AG04450 (cell line): ENCODE measurements at regions of chr11 and their contacts with region 1.

Region 1: GRCh38 chr11:6443269-6444003 is 2.6 kb upstream of the HPX start:
- DNase-seq: no peak
- H3K4me3 ChIP-seq: no peak overlapping the region
- H3K27ac ChIP-seq: no peak overlapping the region
- H3K27me3 ChIP-seq: no peaks in the 10 kb centered on the region
- CTCF ChIP-seq: peak; percentile 89

Region 2: DNA sequence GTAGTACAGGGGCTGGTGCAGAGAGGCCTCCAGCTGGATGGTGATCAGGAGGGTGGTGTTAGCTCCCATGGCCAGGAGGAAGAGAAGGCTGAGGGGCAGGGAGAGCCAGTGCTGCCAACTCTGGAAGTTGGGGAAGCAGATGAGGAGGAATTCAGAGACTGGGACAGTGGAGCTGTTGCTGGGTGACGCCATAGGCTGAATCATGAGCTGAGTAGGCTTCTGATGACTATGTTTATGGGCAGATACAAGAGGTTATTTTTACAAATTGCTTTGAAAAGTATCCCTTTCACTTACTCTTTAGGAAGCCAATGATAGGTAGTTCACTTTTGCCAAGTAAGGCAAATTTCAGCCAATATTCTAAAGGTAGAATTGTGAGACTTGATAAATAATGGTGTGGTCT is 415.9 kb before region 1 on chr11:
- CTCF ChIA-PET with region 1: no interaction called
- POLR2A ChIA-PET with region 1: no interaction called
- DNase-seq: no peak
- H3K4me3 ChIP-seq: no peak overlapping the region
- H3K27ac ChIP-seq: no peak overlapping the region
- H3K27me3 ChIP-seq: no peaks in the 10 kb centered on the region
- CTCF ChIP-seq: no peak

Region 3: DNA sequence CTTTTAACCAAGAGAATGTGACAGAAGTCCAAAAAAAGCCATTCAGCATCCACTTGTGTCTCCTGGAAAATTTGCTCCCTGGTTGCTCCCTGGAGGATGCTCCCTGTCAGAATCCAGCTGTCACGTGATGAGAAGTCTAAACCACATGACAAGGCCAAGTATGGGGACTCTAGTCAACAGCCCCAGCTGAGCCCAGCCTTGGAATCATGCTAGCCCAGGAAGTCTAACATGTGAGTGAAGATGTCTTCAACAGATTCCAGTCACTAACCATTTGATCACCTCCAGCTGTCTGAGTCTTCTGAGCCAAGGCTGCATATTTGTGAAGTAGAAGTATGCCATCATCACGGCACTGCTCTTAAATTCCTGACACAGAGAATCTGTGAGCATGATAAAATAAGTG is 331.8 kb before region 1 on chr11:
- CTCF ChIA-PET with region 1: no interaction called
- POLR2A ChIA-PET with region 1: no interaction called
- DNase-seq: no peak
- H3K4me3 ChIP-seq: no peak overlapping the region
- H3K27ac ChIP-seq: no peak overlapping the region
- H3K27me3 ChIP-seq: no peaks in the 10 kb centered on the region
- CTCF ChIP-seq: no peak

Region 4: DNA sequence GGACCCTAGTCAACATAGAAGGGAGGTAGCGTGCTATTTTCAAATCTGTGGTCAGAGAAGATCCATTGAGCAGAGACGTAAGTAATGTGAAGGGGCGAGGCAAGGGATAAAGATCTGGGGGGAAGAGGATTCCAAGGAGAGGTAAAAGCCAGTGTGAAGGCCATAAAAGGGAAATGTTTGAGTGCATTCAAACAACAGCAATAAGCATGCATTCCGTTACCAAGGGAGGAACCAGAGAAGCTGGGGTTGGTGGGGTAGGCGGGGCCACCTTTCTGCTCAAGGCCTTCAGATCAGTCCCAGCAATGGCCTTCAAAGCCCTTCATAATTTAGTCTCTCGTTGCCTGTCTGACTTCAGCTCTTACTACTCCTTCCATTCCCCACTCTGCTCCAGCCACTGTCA is 71.6 kb before region 1 on chr11:
- CTCF ChIA-PET with region 1: interaction called, 604 read pairs
- POLR2A ChIA-PET with region 1: no interaction called
- DNase-seq: no peak
- H3K4me3 ChIP-seq: no peak overlapping the region
- H3K27ac ChIP-seq: no peak overlapping the region
- H3K27me3 ChIP-seq: peaks cover under 1% of the 10 kb centered on the region
- CTCF ChIP-seq: no peak

Region 5: GRCh38 chr11:6389921-6390724 is 53.3 kb before region 1 on chr11 and contains the start of gene SMPD1:
- CTCF ChIA-PET with region 1: interaction called, 604 read pairs
- POLR2A ChIA-PET with region 1: no interaction called
- DNase-seq: peak; percentile 58
- H3K4me3 ChIP-seq: peak within 1 kb of the TSS; percentile 84
- H3K27ac ChIP-seq: peak within 1 kb of the TSS; percentile 88
- H3K27me3 ChIP-seq: no peaks in the 10 kb centered on the region
- CTCF ChIP-seq: no peak
- polyA plus RNA-seq, gene SMPD1: 68.0 and 83.7 TPM in 2 replicates

Region 6: DNA sequence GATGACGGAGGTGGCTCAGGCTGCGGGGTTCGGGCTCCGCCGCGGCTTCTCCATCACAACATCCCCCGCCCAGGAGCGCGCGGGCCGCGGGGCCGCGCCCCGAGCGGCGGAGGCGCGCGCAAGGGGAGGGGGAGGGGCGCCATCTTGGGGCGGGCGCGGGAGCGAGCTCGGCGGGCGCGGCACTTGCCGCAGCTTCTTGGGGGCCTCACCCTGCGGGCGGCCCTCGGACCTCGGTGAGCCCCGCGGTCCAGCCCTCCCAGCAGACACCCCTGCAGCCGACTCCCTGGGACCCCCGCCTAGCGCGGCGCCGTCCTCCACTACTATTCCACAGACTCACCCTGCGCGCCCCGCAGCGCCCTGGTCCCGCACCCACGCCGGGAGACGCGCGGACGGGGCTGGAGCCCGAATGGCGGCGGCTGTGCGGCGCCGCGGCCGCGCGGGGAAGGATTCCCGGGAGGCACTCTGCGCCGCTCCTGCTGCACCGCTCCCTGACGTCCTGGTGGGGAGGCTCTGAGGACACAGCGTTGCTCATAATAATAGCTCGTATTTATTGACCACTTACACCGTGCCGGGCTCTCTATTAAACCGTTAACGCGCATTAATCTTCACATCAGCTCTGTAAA is 24.3 kb before region 1 on chr11 and contains the start of gene APBB1:
- CTCF ChIA-PET with region 1: interaction called, 28 read pairs
- POLR2A ChIA-PET with region 1: interaction called, 4 read pairs
- DNase-seq: no peak
- H3K4me3 ChIP-seq: peak within 1 kb of the TSS; percentile 80
- H3K27ac ChIP-seq: no peak within 1 kb of the TSS
- H3K27me3 ChIP-seq: no peaks in the 10 kb centered on the region
- CTCF ChIP-seq: 0 out of 2 replicates have a peak, but pooled peaks have one; percentile 8
- polyA plus RNA-seq, gene APBB1: 42.2 and 54.5 TPM in 2 replicates

Region 7: GRCh38 chr11:6431861-6432260 is 11.6 kb before region 1 on chr11:
- CTCF ChIA-PET with region 1: interaction called, 20 read pairs
- POLR2A ChIA-PET with region 1: no interaction called
- DNase-seq: no peak
- H3K4me3 ChIP-seq: no peak overlapping the region
- H3K27ac ChIP-seq: no peak overlapping the region
- H3K27me3 ChIP-seq: no peaks in the 10 kb centered on the region
- CTCF ChIP-seq: no peak

Region 8: GRCh38 chr11:6473481-6474422 is 30.3 kb after region 1 on chr11 and contains the start of gene TRIM3:
- CTCF ChIA-PET with region 1: interaction called, 15 read pairs
- POLR2A ChIA-PET with region 1: no interaction called
- DNase-seq: peak; percentile 50
- H3K4me3 ChIP-seq: peak within 1 kb of the TSS; percentile 84
- H3K27ac ChIP-seq: peak within 1 kb of the TSS; percentile 94
- H3K27me3 ChIP-seq: no peaks in the 10 kb centered on the region
- CTCF ChIP-seq: peak; percentile 57
- polyA plus RNA-seq, gene TRIM3: 10.5 and 11.7 TPM in 2 replicates

Region 9: DNA sequence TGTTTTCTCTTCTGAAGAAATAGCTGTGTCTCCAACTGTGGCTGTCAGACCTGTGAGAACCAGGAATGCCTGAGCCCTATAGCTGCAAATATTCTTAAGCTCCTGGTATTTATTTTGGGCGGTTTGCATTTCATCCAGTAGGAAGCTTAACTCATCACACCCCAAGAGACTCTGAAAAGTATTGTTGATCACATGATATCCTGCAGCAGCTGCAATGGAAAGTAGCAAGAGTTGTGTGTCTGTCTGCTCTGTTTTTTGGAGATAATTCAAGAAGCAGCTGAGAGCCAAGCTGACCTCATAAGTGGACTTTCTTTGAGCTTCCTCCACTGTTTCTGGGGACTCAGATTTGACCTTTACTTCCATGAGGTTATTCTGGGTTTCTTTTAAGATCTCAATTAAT is 276.1 kb after region 1 on chr11:
- CTCF ChIA-PET with region 1: no interaction called
- POLR2A ChIA-PET with region 1: no interaction called
- DNase-seq: no peak
- H3K4me3 ChIP-seq: no peak overlapping the region
- H3K27ac ChIP-seq: no peak overlapping the region
- H3K27me3 ChIP-seq: no peaks in the 10 kb centered on the region
- CTCF ChIP-seq: no peak